Heart right ventricle (tissue), 16 donors: ENCODE measurements at regions of chrX and their contacts with region 1.

Region 1: GRCh38 chrX:2474280-2474962 is 26.4 kb downstream of the DHRSX start:
- DNase-seq: no peak
- ATAC-seq: no peak
- H3K4me3 ChIP-seq: no peak overlapping the region
- H3K27ac ChIP-seq: no peak overlapping the region
- H3K4me1 ChIP-seq: peaks cover 0 to 7% (median 0%) of the 10 kb centered on the region in 9 donors
- H3K27me3 ChIP-seq: no peaks in the 10 kb centered on the region
- CTCF ChIP-seq: no peak

Region 2: DNA sequence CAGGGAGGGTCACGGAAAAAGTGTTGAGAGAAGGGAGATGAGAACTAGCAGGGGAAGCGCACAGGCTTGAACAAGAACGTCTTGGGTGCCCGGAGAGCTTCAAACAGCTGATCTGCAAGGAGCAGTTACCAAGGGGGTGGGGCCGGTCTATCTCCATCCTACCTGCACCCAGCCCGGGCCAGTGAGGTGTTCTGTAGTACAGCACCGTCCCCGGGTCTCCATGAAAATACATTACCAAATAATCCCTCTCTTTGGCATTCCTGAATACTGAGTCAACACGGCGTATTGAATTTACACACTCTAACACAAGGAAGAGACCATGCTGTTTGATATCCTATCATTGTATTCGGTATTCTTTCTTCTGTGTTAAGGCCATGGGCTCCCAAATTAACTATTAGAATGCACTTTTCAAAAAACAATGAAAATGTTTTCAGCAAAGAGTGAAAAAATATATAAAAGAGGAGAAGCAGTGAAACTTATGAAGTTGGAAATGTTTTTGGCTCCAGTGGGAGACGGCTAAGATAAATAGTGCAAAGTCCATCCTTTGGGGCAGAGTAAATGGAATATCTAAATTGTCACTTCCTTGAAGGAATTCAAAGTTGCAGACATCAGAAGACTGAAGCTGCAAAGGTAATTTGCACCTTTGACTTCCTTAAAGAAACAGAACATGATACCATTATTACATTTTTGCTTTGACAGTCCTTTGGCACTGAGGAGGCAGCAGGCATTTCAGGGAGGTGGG is 64.0 kb before region 1 on chrX:
- intact Hi-C with region 1: loop called in 1 of 10 experiments (anchors 10 kb)
- DNase-seq: no peak
- ATAC-seq: no peak
- H3K4me3 ChIP-seq: no peak overlapping the region
- H3K27ac ChIP-seq: no peak overlapping the region
- H3K4me1 ChIP-seq: no peaks in the 10 kb centered on the region
- H3K27me3 ChIP-seq: no peaks in the 10 kb centered on the region
- CTCF ChIP-seq: no peak

Region 3: GRCh38 chrX:2577844-2578506 is 103.6 kb after region 1 on chrX:
- intact Hi-C with region 1: no loop called
- DNase-seq: no peak
- ATAC-seq: no peak
- H3K4me3 ChIP-seq: no peak overlapping the region
- H3K27ac ChIP-seq: no peak overlapping the region
- H3K4me1 ChIP-seq: peaks cover 0 to 5% (median 0%) of the 10 kb centered on the region in 9 donors
- H3K27me3 ChIP-seq: peaks cover 0 to 41% (median 21%) of the 10 kb centered on the region in 7 donors
- CTCF ChIP-seq: no peak